Activated CD4-positive, alpha-beta T cell treated with anti-CD3 and anti-CD28 coated beads, Interleukin-2, amount 10 ng/mL, durations not matched to agents 24 days and 14 days (primary cell): ENCODE measurements at regions of chr1 and their contacts with region 1.

Region 1: GRCh38 chr1:23699280-23700179 is 7.9 kb downstream of the RPL11 start:
- DNase-seq: no peak
- H3K4me3 Mint-ChIP-seq: no peak overlapping the region
- H3K27ac Mint-ChIP-seq: no peak overlapping the region
- H3K4me1 Mint-ChIP-seq: peaks cover 37% of the 10 kb centered on the region
- H3K27me3 Mint-ChIP-seq: no peaks in the 10 kb centered on the region

Region 2: DNA sequence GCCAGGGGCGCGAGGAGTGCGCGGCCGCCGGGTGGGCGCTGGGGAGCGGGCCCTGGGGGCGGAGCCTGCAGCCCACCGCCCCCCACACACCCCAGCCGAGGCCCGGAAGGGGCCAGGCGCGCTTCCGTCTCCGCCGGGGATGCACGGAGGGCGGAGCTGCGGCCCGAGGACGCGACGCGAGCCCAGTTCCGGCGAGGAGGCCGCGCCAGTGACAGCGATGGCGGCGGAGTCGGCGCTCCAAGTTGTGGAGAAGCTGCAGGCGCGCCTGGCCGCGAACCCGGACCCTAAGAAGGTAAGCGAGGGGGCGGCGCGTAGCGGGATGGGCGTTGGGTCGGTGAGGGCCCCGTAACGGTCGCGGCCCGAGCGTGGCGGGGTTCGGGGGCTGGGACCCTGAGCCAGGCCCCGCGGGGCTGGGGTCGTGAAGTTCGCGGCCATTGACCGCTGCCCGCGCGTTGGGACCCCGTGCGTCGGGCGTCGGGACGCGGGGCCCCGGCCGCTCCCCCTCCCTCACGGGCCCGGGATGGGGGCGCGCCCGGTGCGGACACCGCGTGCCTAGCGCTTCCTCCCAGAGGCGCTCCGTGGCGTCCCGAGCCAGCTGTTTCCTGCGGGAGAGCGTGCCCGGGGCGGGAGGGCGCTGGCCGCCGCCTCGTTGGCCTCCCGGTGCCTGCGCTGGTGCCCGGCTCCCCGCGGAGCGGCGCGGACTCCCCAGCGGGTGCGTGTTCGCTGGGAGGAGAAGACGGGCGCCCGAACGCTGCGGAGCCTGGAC is 43.9 kb after region 1 on chr1 and contains the start of gene ELOA:
- intact Hi-C with region 1: loop called (anchors 2 kb)
- DNase-seq: peak; percentile 95
- H3K4me3 Mint-ChIP-seq: peak within 1 kb of the TSS; percentile 91
- H3K27ac Mint-ChIP-seq: peak within 1 kb of the TSS; percentile 90
- H3K4me1 Mint-ChIP-seq: peaks cover 40% of the 10 kb centered on the region
- H3K27me3 Mint-ChIP-seq: no peaks in the 10 kb centered on the region
- total RNA-seq, gene ELOA: 51.9 and 54.3 TPM in 2 replicates

Region 3: GRCh38 chr1:24036088-24036487 is 336.6 kb after region 1 on chr1:
- intact Hi-C with region 1: no loop called
- DNase-seq: no peak
- H3K4me3 Mint-ChIP-seq: no peak overlapping the region
- H3K27ac Mint-ChIP-seq: no peak overlapping the region
- H3K4me1 Mint-ChIP-seq: no peaks in the 10 kb centered on the region
- H3K27me3 Mint-ChIP-seq: peaks cover 9% of the 10 kb centered on the region